ENCODE measurements at regions of chr5 and their contacts with region 1.

Region 1: GRCh38 chr5:128213340-128213739 is 129.8 kb downstream of the SLC12A2 start:
- DNase-seq: peak; percentile 61
- ATAC-seq: peak; percentile 76
- H3K4me3 ChIP-seq: no peak overlapping the region
- H3K27ac ChIP-seq: no peak overlapping the region
- H3K4me1 ChIP-seq: no peaks in the 10 kb centered on the region
- H3K27me3 ChIP-seq: no peaks in the 10 kb centered on the region
- CTCF ChIP-seq: peak; percentile 66 to 87 (median 78); a peak in 5 of 6 replicates
- POLR2A ChIP-seq: no peak
- RAD21 ChIP-seq: peak; percentile 92

Region 2: DNA sequence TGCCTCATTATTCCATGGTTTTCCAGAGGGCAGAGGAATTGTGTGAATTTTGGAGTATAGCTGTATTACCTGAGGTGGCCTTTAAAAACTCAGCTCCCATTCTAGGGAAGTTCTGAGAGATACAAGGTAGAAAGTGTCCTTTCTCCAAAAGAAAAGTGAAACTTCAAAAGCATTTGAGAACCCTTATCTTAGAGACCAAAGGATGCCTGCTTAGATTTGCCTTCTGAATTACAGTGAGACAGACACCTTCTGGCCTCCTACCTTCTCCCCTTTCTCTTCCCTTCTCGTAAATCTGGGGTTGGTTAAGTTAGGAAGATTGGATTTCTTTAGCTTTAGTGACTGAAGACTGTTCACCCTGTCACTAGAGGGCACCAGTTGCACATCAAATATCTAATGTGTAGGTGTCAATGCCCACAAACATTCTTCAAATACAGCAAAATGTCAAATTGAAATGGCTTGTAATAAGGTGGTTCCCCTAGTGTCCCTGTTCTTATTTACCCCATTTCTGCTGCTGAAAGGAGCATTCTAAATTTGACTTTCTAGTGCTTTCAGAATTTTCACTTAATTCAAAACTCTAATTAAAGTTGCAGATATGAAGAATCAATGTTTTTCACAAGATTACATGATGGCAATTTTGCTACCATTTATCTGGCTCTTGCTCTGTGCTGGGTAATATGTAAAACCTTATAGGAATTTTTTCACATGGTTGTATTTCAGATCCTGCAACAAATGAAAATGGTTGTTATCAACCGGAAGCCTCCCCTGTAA is 649.2 kb before region 1 on chr5:
- CTCF ChIA-PET with region 1: no interaction called
- POLR2A ChIA-PET with region 1: no interaction called
- RAD21 ChIA-PET with region 1: no interaction called
- intact Hi-C with region 1: loop called (anchors 5 kb)
- DNase-seq: peak; percentile 48
- ATAC-seq: peak; percentile 90
- H3K4me3 ChIP-seq: no peak overlapping the region
- H3K27ac ChIP-seq: no peak overlapping the region
- H3K4me1 ChIP-seq: no peaks in the 10 kb centered on the region
- H3K27me3 ChIP-seq: no peaks in the 10 kb centered on the region
- CTCF ChIP-seq: peak; percentile 52 to 82 (median 69); a peak in 5 of 6 replicates
- POLR2A ChIP-seq: no peak
- RAD21 ChIP-seq: peak; percentile 81

Region 3: DNA sequence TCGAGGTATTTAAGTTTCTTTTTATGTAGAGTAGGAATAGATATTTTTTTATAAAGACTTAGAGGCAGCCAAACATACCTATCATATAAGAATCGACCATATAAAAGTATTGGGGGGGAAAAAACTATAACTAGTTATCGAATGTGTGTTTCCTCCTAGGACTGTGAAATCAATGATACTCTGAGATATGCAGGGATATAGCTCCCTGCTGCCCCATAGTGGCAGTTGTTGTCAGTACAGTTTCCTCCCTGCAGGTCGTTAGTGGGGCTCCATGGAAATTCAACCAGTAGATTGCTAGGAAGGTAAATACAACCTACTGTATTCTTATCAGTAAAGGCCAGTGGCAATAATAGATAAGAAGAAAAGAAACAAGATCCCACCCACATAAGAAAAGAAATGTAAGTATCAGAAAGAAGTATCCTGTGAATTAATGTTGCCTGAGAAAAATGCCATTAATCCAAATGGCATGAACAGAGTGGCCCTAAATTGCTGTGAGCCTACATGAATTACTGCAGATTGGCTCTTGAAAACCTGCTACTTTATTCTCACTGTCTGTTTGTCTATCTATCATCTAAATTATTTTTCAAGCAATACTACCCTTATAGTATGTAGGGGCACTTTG is 461.6 kb after region 1 on chr5:
- CTCF ChIA-PET with region 1: no interaction called
- POLR2A ChIA-PET with region 1: no interaction called
- RAD21 ChIA-PET with region 1: no interaction called
- intact Hi-C with region 1: loop called (anchors 1 kb)
- DNase-seq: peak; percentile 50
- ATAC-seq: peak; percentile 97
- H3K4me3 ChIP-seq: no peak overlapping the region
- H3K27ac ChIP-seq: no peak overlapping the region
- H3K4me1 ChIP-seq: no peaks in the 10 kb centered on the region
- H3K27me3 ChIP-seq: no peaks in the 10 kb centered on the region
- CTCF ChIP-seq: peak; percentile 47 to 89 (median 84); a peak in 5 of 6 replicates
- POLR2A ChIP-seq: no peak
- RAD21 ChIP-seq: peak; percentile 67

Region 4: GRCh38 chr5:128905571-128906110 is 692.3 kb after region 1 on chr5:
- CTCF ChIA-PET with region 1: no interaction called
- POLR2A ChIA-PET with region 1: no interaction called
- RAD21 ChIA-PET with region 1: no interaction called
- intact Hi-C with region 1: loop called (anchors 5 kb)
- DNase-seq: peak; percentile 61
- ATAC-seq: peak; percentile 97
- H3K4me3 ChIP-seq: no peak overlapping the region
- H3K27ac ChIP-seq: no peak overlapping the region
- H3K4me1 ChIP-seq: no peaks in the 10 kb centered on the region; a peak in 1 of 4 replicates
- H3K27me3 ChIP-seq: no peaks in the 10 kb centered on the region
- CTCF ChIP-seq: peak; percentile 62 to 81 (median 76)
- POLR2A ChIP-seq: no peak
- RAD21 ChIP-seq: peak; percentile 88

Region 5: GRCh38 chr5:129120158-129120581 is 906.8 kb after region 1 on chr5:
- CTCF ChIA-PET with region 1: no interaction called
- POLR2A ChIA-PET with region 1: no interaction called
- RAD21 ChIA-PET with region 1: no interaction called
- intact Hi-C with region 1: loop called (anchors 5 kb)
- DNase-seq: no peak
- ATAC-seq: no peak
- H3K4me3 ChIP-seq: no peak overlapping the region
- H3K27ac ChIP-seq: no peak overlapping the region
- H3K4me1 ChIP-seq: no peaks in the 10 kb centered on the region; a peak in 1 of 4 replicates
- H3K27me3 ChIP-seq: no peaks in the 10 kb centered on the region
- CTCF ChIP-seq: no peak
- POLR2A ChIP-seq: no peak
- RAD21 ChIP-seq: no peak